HepG2 (cell line): ENCODE measurements at regions of chr1 and their contacts with region 1.

Region 1: DNA sequence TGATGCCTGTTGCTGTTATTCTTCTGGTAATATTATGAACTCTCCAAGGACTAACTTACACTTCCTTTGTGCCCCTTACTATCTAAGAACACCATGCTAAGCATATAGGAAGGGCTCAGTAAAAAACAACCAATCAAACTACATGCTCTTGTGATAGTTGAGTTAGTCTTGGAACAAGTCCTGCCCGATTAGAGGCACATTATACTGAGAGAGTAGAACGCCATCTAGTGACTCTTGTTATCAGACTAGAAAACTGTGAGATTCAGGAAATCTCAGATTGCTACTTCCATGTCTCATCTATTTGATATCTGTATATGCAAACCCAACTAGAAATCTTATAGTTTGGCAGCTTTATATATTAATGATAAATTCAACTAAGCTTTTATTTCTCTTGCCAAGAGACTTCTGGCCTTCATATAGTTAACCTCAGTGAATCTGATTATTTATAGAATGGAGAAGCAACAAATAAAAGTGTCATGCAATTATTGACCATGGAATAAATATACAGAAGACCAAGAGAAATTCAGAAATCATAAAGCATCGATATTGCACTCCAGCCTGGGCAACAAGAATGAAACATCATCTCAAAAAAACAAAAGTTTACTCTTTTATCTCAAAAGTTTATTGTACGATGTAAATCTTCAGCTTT is 7.8 kb upstream of the SRRM1 start:
- DNase-seq: peak; percentile 72
- ATAC-seq: peak; percentile 74
- H3K4me3 ChIP-seq: no peak overlapping the region
- H3K27ac ChIP-seq: no peak overlapping the region
- H3K4me1 ChIP-seq: peaks cover 35% of the 10 kb centered on the region
- H3K27me3 ChIP-seq: no peaks in the 10 kb centered on the region
- CTCF ChIP-seq: peak; percentile 85
- EP300 ChIP-seq: no peak
- POLR2A ChIP-seq: no peak
- RAD21 ChIP-seq: peak; percentile 72

Region 2: DNA sequence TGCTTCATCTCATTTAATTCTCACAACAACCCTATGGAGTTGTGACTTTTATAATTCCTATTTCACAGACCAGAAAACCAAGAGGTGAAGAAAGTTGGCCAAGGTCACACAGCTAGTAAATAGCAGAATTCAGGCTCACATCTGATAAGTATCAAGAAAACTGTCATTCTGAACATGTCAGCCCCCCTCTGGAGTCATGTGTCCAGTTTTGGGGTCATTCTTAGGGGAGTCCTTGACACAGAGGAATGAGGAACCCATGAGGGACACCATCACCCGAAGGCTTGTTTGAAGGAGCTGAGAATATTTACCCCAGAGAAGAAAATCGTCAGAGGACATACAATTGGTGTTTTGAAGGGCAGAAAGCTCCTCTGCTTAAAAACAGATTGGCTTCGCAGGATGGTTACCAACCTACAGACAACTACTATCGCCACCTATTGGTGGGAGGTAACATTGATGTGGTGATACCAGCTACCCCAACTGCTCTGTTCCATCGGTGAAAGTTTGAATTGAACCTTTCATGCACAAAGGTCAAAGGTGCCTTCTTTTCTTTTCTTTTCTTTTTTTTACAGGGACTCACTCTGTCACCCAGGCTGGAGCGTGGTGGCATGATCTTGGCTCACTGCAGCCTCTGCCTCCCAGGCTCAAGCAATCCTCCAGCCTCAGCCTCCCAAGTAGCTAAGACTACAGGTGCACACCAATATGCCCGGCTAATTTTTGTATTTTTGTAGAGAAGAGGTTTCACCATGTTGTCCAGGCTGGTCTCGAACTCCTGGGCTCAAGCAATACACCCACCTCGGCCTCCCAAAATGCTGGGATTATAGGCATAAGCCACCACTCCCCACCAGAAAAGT is 48.1 kb before region 1 on chr1:
- CTCF ChIA-PET with region 1: interaction called, 6 read pairs
- POLR2A ChIA-PET with region 1: no interaction called
- in situ Hi-C with region 1: no loop called
- intact Hi-C with region 1: loop called (anchors 5 kb)
- DNase-seq: peak; percentile 53
- ATAC-seq: peak; percentile 78
- H3K4me3 ChIP-seq: no peak overlapping the region
- H3K27ac ChIP-seq: no peak overlapping the region
- H3K4me1 ChIP-seq: peaks cover 45% of the 10 kb centered on the region
- H3K27me3 ChIP-seq: no peaks in the 10 kb centered on the region
- CTCF ChIP-seq: peak; percentile 83
- EP300 ChIP-seq: no peak
- POLR2A ChIP-seq: no peak
- RAD21 ChIP-seq: peak; percentile 67; the same call in 1 of the 2 replicates